CD4-positive, alpha-beta memory T cell (primary cell): ENCODE measurements at regions of chr10 and their contacts with region 1.

Region 1: GRCh38 chr10:102641880-102642735 is 2.2 kb upstream of the TRIM8 start:
- DNase-seq: peak; percentile 91 to 99 (median 95)
- H3K4me3 ChIP-seq: peak overlapping the region; percentile 26 to 78
- H3K4me3 Mint-ChIP-seq: peak overlapping the region; percentile 90 to 97 (median 94)
- H3K27ac ChIP-seq: peak overlapping the region; percentile 94
- H3K27ac Mint-ChIP-seq: peak overlapping the region; percentile 96 to 99 (median 98)
- H3K4me1 ChIP-seq: peaks cover 14% of the 10 kb centered on the region
- H3K4me1 Mint-ChIP-seq: peaks cover 13 to 39% (median 18%) of the 10 kb centered on the region in 4 donors
- H3K27me3 ChIP-seq: no peaks in the 10 kb centered on the region
- H3K27me3 Mint-ChIP-seq: no peaks in the 10 kb centered on the region

Region 2: GRCh38 chr10:101818119-101818871 is 823.8 kb before region 1 on chr10 and contains the start of gene OGA:
- CTCF ChIA-PET with region 1: no interaction called
- POLR2A ChIA-PET with region 1: interaction called, 5 read pairs
- intact Hi-C with region 1: loop called (anchors 5 kb)
- DNase-seq: peak; percentile 97 to 100 (median 99)
- H3K4me3 ChIP-seq: peak within 1 kb of the TSS; percentile 95
- H3K4me3 Mint-ChIP-seq: peak within 1 kb of the TSS; percentile 94 to 100 (median 98)
- H3K27ac ChIP-seq: peak within 1 kb of the TSS; percentile 85
- H3K27ac Mint-ChIP-seq: peak within 1 kb of the TSS; percentile 91 to 100 (median 97)
- H3K4me1 ChIP-seq: peaks cover 47% of the 10 kb centered on the region
- H3K4me1 Mint-ChIP-seq: peaks cover 31 to 59% (median 42%) of the 10 kb centered on the region in 4 donors
- H3K27me3 ChIP-seq: no peaks in the 10 kb centered on the region
- H3K27me3 Mint-ChIP-seq: no peaks in the 10 kb centered on the region
- total RNA-seq, gene OGA: 307 to 325 TPM

Region 3: GRCh38 chr10:102394079-102394800 is 247.9 kb before region 1 on chr10:
- CTCF ChIA-PET with region 1: no interaction called
- POLR2A ChIA-PET with region 1: interaction called, 23 read pairs
- intact Hi-C with region 1: loop called (anchors 1 kb)
- DNase-seq: peak; percentile 99 to 100 (median 99)
- H3K4me3 ChIP-seq: peak overlapping the region; percentile 97 to 98
- H3K4me3 Mint-ChIP-seq: peak overlapping the region; percentile 94 to 98 (median 96)
- H3K27ac ChIP-seq: peak overlapping the region; percentile 100
- H3K27ac Mint-ChIP-seq: peak overlapping the region; percentile 98 to 100 (median 100)
- H3K4me1 ChIP-seq: peaks cover 43% of the 10 kb centered on the region
- H3K4me1 Mint-ChIP-seq: peaks cover 18 to 62% (median 34%) of the 10 kb centered on the region in 4 donors
- H3K27me3 ChIP-seq: no peaks in the 10 kb centered on the region
- H3K27me3 Mint-ChIP-seq: no peaks in the 10 kb centered on the region

Region 4: GRCh38 chr10:102583435-102584417 is 58.4 kb before region 1 on chr10:
- CTCF ChIA-PET with region 1: no interaction called
- POLR2A ChIA-PET with region 1: interaction called, 16 read pairs
- intact Hi-C with region 1: no loop called
- DNase-seq: peak; percentile 74 to 83 (median 76)
- H3K4me3 ChIP-seq: no peak overlapping the region
- H3K4me3 Mint-ChIP-seq: no peak overlapping the region
- H3K27ac ChIP-seq: no peak overlapping the region
- H3K27ac Mint-ChIP-seq: peak overlapping the region in 5 of 7 donors; percentile 7 to 84 (median 60)
- H3K4me1 ChIP-seq: peaks cover 8% of the 10 kb centered on the region
- H3K4me1 Mint-ChIP-seq: peaks cover 13 to 20% (median 15%) of the 10 kb centered on the region in 4 donors
- H3K27me3 ChIP-seq: no peaks in the 10 kb centered on the region
- H3K27me3 Mint-ChIP-seq: no peaks in the 10 kb centered on the region

Region 5: DNA sequence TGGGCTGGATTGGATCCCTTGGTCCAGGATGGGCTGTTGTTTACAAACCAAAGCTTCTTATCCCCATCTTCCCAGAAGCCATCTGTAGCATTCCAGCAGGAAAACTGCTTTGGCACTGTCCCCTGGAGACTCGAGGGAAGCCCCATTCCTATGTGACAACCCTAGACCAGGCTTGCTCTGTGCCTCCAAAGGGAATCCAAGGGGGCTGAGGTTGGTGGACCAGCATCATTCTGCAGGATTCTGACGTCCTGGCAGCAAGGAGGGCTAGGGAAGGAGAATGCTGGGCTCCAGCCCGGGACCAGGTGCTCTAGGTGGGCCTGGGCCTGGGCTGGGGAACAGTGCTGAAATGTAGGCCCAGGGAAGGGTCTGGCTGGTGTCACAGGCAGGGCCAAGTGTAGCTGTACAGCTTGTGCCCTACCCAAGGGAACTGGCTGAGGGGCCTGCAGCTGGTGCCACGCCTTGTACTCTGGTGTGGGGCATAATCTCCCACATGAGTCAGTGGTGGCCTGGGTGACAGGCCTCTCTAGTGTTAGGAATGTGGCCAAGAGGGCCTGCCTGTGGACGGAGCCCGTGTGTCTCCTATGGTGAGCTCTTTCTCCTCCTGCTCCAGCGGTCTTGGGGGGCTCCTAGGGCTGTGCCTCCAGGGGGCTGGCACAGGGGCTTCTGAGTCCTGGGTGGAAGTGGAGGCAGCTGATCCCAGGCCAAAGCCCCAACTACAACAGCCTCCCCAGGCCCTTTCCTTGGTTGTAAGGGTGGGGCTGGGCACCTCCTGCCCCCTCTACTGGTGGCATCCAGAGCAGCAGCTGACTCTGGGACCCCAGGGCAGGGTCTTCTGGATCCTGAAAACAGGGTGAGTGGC is 27.3 kb after region 1 on chr10:
- CTCF ChIA-PET with region 1: interaction called, 44 read pairs
- POLR2A ChIA-PET with region 1: interaction called, 431 read pairs
- intact Hi-C with region 1: loop called (anchors 1 kb)
- DNase-seq: no peak
- H3K4me3 ChIP-seq: no peak overlapping the region
- H3K4me3 Mint-ChIP-seq: no peak overlapping the region
- H3K27ac ChIP-seq: no peak overlapping the region
- H3K27ac Mint-ChIP-seq: peak overlapping the region in 5 of 7 donors; percentile 36 to 83 (median 42)
- H3K4me1 ChIP-seq: peaks cover 49% of the 10 kb centered on the region
- H3K4me1 Mint-ChIP-seq: peaks cover 23 to 49% (median 29%) of the 10 kb centered on the region in 4 donors
- H3K27me3 ChIP-seq: no peaks in the 10 kb centered on the region
- H3K27me3 Mint-ChIP-seq: no peaks in the 10 kb centered on the region

Region 6: DNA sequence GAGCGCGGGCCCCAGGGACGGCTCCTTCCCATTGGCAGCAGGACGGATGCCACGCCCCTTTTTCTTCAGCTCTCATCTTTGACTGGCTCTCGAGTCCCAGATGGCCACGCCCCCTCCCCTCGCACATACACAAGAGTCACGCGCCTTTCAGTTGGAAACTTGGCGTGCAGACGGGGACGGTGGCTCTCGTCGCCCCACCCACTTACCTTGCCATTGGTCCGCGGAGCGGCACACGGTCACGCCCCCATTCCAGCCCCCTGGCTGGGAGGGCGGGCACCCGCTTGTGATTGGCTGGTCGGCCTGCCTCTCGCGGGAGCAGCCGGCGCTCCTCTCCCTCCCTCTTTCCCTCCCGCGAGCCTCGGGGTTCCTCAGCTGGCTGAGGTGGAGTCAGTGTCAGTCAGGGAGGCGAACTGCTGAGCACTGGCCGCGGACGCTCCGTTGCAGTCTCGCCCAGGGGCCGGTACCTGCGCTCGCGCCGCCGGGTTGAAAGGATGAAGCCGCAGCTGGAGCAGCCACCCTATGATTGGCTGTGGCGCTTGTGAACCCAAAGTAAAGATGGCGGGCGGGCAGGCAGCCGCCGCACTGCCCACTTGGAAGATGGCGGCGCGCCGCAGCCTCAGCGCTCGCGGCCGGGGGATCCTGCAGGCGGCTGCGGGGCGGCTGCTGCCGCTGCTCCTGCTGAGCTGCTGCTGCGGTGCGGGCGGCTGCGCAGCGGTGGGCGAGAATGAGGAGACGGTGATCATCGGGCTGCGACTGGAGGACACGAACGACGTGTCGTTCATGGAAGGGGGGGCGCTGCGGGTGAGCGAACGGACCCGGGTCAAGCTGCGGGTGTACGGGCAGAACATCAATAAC is 276.1 kb after region 1 on chr10 and contains the start of gene CNNM2:
- CTCF ChIA-PET with region 1: no interaction called
- POLR2A ChIA-PET with region 1: interaction called, 3 read pairs
- intact Hi-C with region 1: loop called (anchors 1 kb)
- DNase-seq: peak; percentile 100
- H3K4me3 ChIP-seq: peak within 1 kb of the TSS; percentile 84 to 91
- H3K4me3 Mint-ChIP-seq: peak within 1 kb of the TSS; percentile 94 to 96 (median 95)
- H3K27ac ChIP-seq: peak within 1 kb of the TSS; percentile 72
- H3K27ac Mint-ChIP-seq: peak within 1 kb of the TSS; percentile 92 to 98 (median 96)
- H3K4me1 ChIP-seq: peaks cover 53% of the 10 kb centered on the region
- H3K4me1 Mint-ChIP-seq: peaks cover 35 to 59% (median 51%) of the 10 kb centered on the region in 4 donors
- H3K27me3 ChIP-seq: no peaks in the 10 kb centered on the region
- H3K27me3 Mint-ChIP-seq: peaks cover 4 to 6% of the 10 kb centered on the region in 2 donors
- total RNA-seq, gene CNNM2: 11.9 to 14.4 TPM